Sigmoid colon (tissue), 7 donors: ENCODE measurements at regions of chr2 and their contacts with region 1.

Region 1: GRCh38 chr2:85888684-85889626 is at the start of gene ST3GAL5:
- DNase-seq: peak; percentile 94
- H3K4me3 ChIP-seq: peak within 1 kb of the TSS; percentile 56 to 85 (median 78)
- H3K27ac ChIP-seq: peak within 1 kb of the TSS; percentile 83 to 85 (median 84)
- H3K4me1 ChIP-seq: peaks cover 0 to 39% (median 29%) of the 10 kb centered on the region in 4 donors
- H3K27me3 ChIP-seq: no peaks in the 10 kb centered on the region
- CTCF ChIP-seq: peak; percentile 15 to 55 (median 35)
- EP300 ChIP-seq: no peak
- POLR2A ChIP-seq: no peak
- total RNA-seq, gene ST3GAL5: 16.1 to 24.2 (median 17.9) TPM

Region 2: GRCh38 chr2:85737481-85737880 is 151.5 kb before region 1 on chr2:
- intact Hi-C with region 1: loop called (anchors 10 kb)
- DNase-seq: peak; percentile 96
- H3K4me3 ChIP-seq: no peak overlapping the region
- H3K27ac ChIP-seq: peak overlapping the region; percentile 70 to 86 (median 82)
- H3K4me1 ChIP-seq: peaks cover 0 to 62% (median 54%) of the 10 kb centered on the region in 4 donors
- H3K27me3 ChIP-seq: no peaks in the 10 kb centered on the region
- CTCF ChIP-seq: no peak
- EP300 ChIP-seq: peak in 2 of 4 donors; percentile 14 to 15
- POLR2A ChIP-seq: no peak

Region 3: GRCh38 chr2:85826990-85827878 is 61.7 kb before region 1 on chr2:
- intact Hi-C with region 1: loop called (anchors 1 kb)
- DNase-seq: peak; percentile 88
- H3K4me3 ChIP-seq: peak overlapping the region in 2 of 4 donors; percentile 18 to 21
- H3K27ac ChIP-seq: no peak overlapping the region
- H3K4me1 ChIP-seq: peaks cover 0 to 12% (median 6%) of the 10 kb centered on the region in 4 donors
- H3K27me3 ChIP-seq: no peaks in the 10 kb centered on the region
- CTCF ChIP-seq: peak; percentile 90 to 95 (median 92)
- EP300 ChIP-seq: no peak
- POLR2A ChIP-seq: no peak

Region 4: DNA sequence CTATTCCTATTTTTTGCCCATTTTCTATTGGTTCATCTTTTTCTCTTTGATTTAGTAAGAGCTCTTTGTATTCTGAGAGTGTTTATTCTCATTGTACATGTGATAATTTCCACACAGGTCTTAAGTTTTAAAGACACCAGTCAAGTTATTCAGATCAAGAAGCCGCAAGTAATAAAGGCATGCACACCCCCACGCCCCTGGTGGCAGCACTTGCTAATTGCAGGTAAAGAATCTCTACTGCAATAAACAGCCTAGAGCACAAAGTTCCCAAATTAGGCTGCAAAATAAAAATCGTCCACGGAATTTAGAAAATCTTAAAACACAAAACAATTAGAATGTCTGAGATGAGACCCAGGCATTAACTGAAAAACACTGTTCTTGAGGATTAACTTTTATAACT is 45.4 kb before region 1 on chr2:
- intact Hi-C with region 1: no loop called
- DNase-seq: no peak
- H3K4me3 ChIP-seq: no peak overlapping the region
- H3K27ac ChIP-seq: no peak overlapping the region
- H3K4me1 ChIP-seq: no peaks in the 10 kb centered on the region
- H3K27me3 ChIP-seq: no peaks in the 10 kb centered on the region
- CTCF ChIP-seq: peak in 2 of 4 experiments; percentile 10 to 19
- EP300 ChIP-seq: no peak
- POLR2A ChIP-seq: no peak

Region 5: GRCh38 chr2:85911814-85912692 is 23.1 kb after region 1 on chr2:
- intact Hi-C with region 1: no loop called
- DNase-seq: no peak
- H3K4me3 ChIP-seq: no peak overlapping the region
- H3K27ac ChIP-seq: peak overlapping the region; percentile 23 to 55 (median 36)
- H3K4me1 ChIP-seq: no peaks in the 10 kb centered on the region
- H3K27me3 ChIP-seq: no peaks in the 10 kb centered on the region
- CTCF ChIP-seq: no peak
- EP300 ChIP-seq: no peak
- POLR2A ChIP-seq: no peak

Region 6: DNA sequence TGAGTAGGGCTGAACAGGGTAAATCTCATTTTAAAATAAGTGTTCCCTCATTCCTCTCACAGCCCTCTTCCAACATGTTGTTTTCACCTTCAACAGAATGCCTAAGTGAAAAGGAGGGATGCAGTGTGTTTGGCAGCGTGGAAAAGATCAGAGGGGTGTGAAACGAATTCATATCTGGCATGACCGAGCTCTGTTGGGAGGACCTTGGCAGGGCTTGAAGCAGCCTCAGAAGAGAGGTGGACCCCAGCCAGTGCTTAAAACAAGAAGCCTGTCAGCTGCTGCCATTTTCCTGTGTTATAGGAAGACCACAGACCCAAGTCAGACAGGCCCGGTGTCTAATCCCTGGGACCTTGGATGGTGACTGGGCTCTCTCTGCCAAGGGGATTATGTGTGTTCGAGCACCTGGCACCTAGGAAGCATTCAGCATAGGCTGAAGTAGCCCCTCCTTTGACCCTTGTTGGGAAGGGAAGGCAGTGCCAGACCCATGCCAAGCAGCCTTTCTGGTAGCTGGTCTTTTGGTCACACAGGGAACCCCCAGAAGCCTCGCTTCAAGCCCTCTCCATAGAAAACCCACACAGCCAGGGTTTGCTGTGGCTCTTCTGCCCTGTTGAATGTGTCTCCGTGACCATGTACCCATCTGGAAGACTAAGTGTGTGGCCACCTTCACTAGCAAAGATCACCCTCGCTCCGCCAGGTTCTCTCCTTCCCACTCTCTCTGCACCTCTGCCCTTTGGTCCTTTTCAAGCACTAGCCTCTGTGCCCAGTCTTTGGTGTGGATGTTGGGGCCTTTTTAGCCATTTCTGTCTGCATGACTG is 87.4 kb after region 1 on chr2:
- intact Hi-C with region 1: loop called (anchors 5 kb)
- DNase-seq: peak; percentile 47
- H3K4me3 ChIP-seq: no peak overlapping the region
- H3K27ac ChIP-seq: no peak overlapping the region
- H3K4me1 ChIP-seq: peaks cover 0 to 14% (median 5%) of the 10 kb centered on the region in 4 donors
- H3K27me3 ChIP-seq: no peaks in the 10 kb centered on the region
- CTCF ChIP-seq: no peak
- EP300 ChIP-seq: no peak
- POLR2A ChIP-seq: no peak

Region 7: DNA sequence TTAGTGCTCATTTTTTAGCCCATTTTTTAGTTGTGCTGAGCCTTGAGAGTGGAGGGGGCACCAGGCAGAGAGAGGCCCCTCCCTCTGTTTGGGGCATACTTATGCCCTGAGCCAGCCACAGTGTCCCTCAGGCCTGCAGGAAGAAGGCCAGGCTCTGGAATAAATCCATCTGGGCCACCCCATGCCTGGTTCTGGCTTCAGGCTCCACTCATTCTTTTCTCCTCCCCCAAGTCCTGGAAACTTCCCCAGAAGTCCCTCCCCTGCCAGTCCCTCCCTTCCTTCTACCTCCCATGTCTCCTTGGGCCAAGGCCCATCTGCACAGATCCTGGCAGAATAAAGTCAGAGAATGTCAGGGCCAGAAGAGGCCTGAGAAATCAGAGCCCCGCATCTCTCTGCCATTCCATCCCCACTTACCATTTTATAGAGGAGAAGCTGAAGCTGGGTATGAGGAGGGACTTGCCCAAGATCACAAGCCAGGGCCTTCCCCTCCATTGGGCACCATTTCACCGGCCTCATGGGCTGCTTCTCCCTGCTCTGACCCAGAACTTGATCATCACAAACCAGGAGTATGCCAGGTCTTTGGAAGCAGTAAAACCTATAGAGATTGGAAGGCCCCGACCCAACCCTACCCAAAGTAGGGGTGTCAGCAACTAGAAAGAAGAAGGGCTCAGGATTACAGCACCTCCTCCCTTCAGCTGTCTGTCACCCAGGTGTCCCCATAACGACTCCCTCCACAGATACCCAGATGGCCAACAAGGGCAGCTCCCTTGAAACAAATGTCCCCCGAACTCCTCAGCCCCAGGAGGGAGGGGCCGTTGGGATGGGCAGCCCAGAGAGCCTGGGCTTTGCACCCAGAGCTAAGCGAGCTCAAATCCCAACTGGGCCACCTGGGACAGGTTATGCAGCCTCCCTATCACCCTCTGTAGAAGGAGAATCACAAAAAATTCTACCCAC is 108.3 kb after region 1 on chr2:
- intact Hi-C with region 1: loop called (anchors 2 kb)
- DNase-seq: peak; percentile 82
- H3K4me3 ChIP-seq: no peak overlapping the region
- H3K27ac ChIP-seq: peak overlapping the region; percentile 64 to 80 (median 74)
- H3K4me1 ChIP-seq: peaks cover 0 to 58% (median 50%) of the 10 kb centered on the region in 4 donors
- H3K27me3 ChIP-seq: no peaks in the 10 kb centered on the region
- CTCF ChIP-seq: no peak
- EP300 ChIP-seq: no peak
- POLR2A ChIP-seq: no peak

Region 8: GRCh38 chr2:86035883-86036668 is 147.1 kb after region 1 on chr2:
- intact Hi-C with region 1: loop called (anchors 1 kb)
- DNase-seq: peak; percentile 93
- H3K4me3 ChIP-seq: no peak overlapping the region
- H3K27ac ChIP-seq: peak overlapping the region; percentile 74 to 84 (median 80)
- H3K4me1 ChIP-seq: peaks cover 0 to 39% (median 29%) of the 10 kb centered on the region in 4 donors
- H3K27me3 ChIP-seq: no peaks in the 10 kb centered on the region
- CTCF ChIP-seq: peak; percentile 14 to 44 (median 41)
- EP300 ChIP-seq: peak in 1 of 4 donors; percentile 9
- POLR2A ChIP-seq: no peak

Region 9: GRCh38 chr2:86079981-86080911 is 191.3 kb after region 1 on chr2:
- intact Hi-C with region 1: loop called (anchors 2 kb)
- DNase-seq: peak; percentile 87
- H3K4me3 ChIP-seq: no peak overlapping the region
- H3K27ac ChIP-seq: no peak overlapping the region
- H3K4me1 ChIP-seq: no peaks in the 10 kb centered on the region
- H3K27me3 ChIP-seq: no peaks in the 10 kb centered on the region
- CTCF ChIP-seq: peak; percentile 43 to 73 (median 60)
- EP300 ChIP-seq: no peak
- POLR2A ChIP-seq: no peak